GM18951 (cell line): ENCODE measurements at regions of chr11 and their contacts with region 1.

Region 1: GRCh38 chr11:94519478-94520084 is 7.3 kb downstream of the C11orf97 start:
- POLR2A ChIP-seq: no peak

Region 2: DNA sequence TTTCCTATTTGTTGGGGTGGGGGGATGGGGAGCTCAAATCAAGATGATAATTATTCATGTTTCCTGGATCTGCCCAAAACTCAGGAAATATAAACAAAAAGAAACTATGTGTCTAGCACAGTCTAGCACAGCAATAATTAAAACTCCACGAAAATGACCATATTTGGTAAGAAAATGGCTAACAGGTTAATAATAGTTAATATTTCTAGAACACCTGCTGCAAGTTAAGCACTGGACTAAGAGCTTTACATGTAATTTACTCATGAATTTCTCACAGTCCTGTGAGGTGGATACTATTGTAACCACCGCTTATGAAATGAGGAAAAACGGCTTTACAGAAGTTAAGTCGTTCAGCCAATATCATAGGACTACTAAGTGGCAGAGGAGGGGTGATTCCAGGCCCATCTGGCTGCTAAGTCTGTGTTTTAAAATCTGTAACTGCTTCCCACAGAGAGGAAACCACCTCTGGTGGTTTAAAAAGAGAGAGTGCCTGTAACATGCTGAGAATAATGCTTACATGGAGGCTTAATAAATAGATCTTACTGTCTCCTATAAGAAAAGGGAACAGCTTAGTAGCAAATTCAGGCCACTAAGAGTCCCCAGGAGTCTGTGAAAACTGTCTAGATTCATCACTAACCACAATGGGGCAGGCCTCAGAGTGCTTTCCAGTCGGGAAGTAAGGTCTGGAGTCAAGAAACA is 237.6 kb after region 1 on chr11:
- in situ Hi-C with region 1: loop called (anchors 10 kb)
- POLR2A ChIP-seq: no peak

Region 3: GRCh38 chr11:94897330-94897768 is 377.8 kb after region 1 on chr11:
- in situ Hi-C with region 1: loop called (anchors 10 kb)
- POLR2A ChIP-seq: no peak